PC-3 (cell line): ENCODE measurements at regions of chr2 and their contacts with region 1.

Region 1: DNA sequence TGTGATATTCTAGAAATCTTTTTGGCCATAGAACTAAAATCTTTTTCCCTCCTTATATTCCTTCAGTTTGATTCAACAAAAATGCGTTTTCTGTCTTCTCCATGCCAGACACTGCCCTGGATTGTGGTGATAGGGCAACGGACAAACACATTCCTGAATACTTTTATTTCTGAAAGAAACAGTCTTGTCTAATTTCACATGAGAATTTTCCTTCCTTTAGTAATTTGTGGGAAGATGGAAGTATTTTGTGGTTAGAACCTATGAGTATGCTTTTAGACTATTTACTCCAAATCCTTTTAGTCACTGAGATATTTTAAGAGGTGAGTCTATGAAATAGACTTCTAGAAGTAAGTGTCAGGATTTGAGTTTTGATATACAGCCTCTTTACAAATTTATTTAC is 49.6 kb downstream of the COL5A2 start:
- DNase-seq: peak; percentile 69
- ATAC-seq: peak; percentile 49
- H3K4me3 ChIP-seq: no peak overlapping the region
- H3K27ac ChIP-seq: peak overlapping the region; percentile 87
- H3K4me1 ChIP-seq: peaks cover 46% of the 10 kb centered on the region
- H3K27me3 ChIP-seq: no peaks in the 10 kb centered on the region
- CTCF ChIP-seq: no peak

Region 2: GRCh38 chr2:188978291-188979081 is 151.5 kb before region 1 on chr2:
- CTCF ChIA-PET with region 1: no interaction called
- POLR2A ChIA-PET with region 1: no interaction called
- intact Hi-C with region 1: no loop called
- DNase-seq: peak; percentile 49
- ATAC-seq: peak; percentile 75
- H3K4me3 ChIP-seq: no peak overlapping the region
- H3K27ac ChIP-seq: no peak overlapping the region
- H3K4me1 ChIP-seq: peaks cover 12% of the 10 kb centered on the region; the same call in 1 of the 2 replicates
- H3K27me3 ChIP-seq: no peaks in the 10 kb centered on the region
- CTCF ChIP-seq: peak; percentile 78

Region 3: DNA sequence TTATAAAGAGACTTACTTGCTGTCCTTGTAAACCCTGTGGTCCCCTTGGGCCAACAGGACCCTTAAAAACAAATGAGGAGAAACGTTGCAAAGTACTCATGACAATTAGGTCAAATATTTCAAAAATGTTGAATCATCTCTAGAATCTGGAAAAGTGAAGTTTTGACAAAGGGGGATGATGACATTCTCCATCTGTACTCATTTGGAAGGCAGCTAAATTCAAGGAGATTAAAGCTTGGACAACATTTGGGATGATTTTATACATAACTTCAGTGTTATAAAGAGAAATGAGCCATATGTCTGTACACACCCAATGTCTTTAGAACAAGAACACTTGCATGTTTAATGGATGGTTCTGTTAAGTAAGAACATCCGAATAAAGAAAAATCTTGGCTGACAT is 43.3 kb before region 1 on chr2:
- CTCF ChIA-PET with region 1: no interaction called
- POLR2A ChIA-PET with region 1: no interaction called
- intact Hi-C with region 1: no loop called
- DNase-seq: peak; percentile 51
- ATAC-seq: no peak
- H3K4me3 ChIP-seq: no peak overlapping the region
- H3K27ac ChIP-seq: no peak overlapping the region
- H3K4me1 ChIP-seq: peaks cover 15% of the 10 kb centered on the region
- H3K27me3 ChIP-seq: no peaks in the 10 kb centered on the region
- CTCF ChIP-seq: no peak

Region 4: DNA sequence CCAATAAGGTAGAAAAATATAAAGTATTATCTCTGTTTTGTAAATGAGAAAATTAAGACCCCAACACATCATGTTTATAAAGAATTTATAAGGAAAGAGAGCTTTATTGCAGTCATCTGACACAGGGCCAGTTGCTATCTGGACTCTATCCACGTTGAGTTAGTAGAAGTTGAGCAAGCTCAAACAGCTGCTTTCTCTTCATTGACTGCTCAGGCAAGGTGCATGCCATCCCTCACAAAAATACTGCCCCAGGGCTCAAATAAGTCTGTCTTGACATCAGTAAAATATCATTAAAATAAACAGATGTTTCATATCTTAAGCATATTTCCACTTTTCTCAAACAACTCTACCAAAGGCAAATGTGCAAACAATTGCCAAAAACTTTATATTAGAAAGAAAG is 34.8 kb after region 1 on chr2:
- CTCF ChIA-PET with region 1: no interaction called
- POLR2A ChIA-PET with region 1: no interaction called
- intact Hi-C with region 1: loop called (anchors 5 kb)
- DNase-seq: peak; percentile 70
- ATAC-seq: peak; percentile 83
- H3K4me3 ChIP-seq: no peak overlapping the region
- H3K27ac ChIP-seq: no peak overlapping the region
- H3K4me1 ChIP-seq: peaks cover 26% of the 10 kb centered on the region
- H3K27me3 ChIP-seq: no peaks in the 10 kb centered on the region
- CTCF ChIP-seq: no peak

Region 5: DNA sequence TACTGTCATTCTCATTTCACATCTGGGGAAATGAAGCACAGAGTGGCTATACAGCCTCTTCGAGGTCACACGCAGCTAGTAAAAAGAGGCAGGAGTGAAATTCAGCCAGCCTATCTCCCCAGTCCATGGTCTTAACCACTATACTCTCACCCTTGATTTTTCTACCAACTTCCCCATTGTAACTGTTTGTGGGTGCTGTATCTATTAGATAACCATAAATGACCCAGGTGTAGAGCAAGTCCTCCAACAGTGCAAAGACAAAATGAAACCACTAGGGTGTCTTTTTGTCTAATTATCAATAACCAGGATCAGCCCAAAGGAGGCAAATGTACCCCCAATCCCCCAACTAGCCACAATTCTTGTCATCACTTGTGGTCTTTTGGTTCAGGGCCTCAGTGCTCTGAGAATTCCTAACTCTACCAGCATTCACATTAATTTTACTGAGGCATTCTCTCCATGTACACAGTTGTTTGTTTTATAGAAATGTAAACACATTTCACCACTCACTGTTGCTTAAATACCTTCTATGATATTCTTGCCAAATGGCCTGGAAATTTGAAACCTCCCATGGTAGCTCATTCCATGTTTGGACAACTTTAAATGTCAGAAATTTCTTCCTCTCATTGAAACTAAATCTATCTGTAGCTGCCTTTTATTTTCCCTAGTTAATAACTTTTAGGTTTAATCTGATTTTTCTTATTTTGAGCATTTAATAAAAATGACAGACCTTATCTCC is 391.9 kb after region 1 on chr2:
- CTCF ChIA-PET with region 1: no interaction called
- POLR2A ChIA-PET with region 1: no interaction called
- intact Hi-C with region 1: no loop called
- DNase-seq: peak; percentile 50
- ATAC-seq: peak; percentile 84
- H3K4me3 ChIP-seq: no peak overlapping the region
- H3K27ac ChIP-seq: no peak overlapping the region
- H3K4me1 ChIP-seq: peaks cover 11% of the 10 kb centered on the region
- H3K27me3 ChIP-seq: no peaks in the 10 kb centered on the region
- CTCF ChIP-seq: no peak